Transverse colon (tissue), 4 donors: ENCODE measurements at regions of chr12 and their contacts with region 1.

Region 1: GRCh38 chr12:66538970-66539369 is 139.9 kb downstream of the GRIP1 start:
- DNase-seq: no peak
- H3K4me3 ChIP-seq: no peak overlapping the region
- H3K27ac ChIP-seq: no peak overlapping the region
- H3K4me1 ChIP-seq: no peaks in the 10 kb centered on the region
- H3K27me3 ChIP-seq: no peaks in the 10 kb centered on the region
- CTCF ChIP-seq: no peak
- EP300 ChIP-seq: no peak
- POLR2A ChIP-seq: no peak

Region 2: DNA sequence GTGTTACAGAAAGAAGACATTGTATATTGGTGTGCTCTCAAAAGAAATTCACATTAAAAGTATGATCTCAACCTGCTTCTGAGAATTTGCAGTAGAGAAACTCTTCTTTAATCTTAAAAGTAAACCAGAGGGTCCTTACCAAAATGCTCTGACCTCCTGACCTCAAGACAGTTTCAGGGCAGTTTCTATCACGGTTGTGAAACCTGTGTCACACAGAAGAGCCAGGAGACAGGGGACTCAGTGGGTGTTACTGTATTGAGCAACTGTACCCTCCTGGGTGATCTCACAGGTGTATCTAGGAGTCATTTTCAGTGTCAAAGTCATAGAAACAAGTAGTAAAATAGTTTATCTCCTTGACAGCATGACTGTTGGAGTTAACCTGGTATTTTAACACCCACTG is 38.1 kb before region 1 on chr12:
- in situ Hi-C with region 1: no loop called
- intact Hi-C with region 1: loop called (anchors 1 kb)
- DNase-seq: no peak
- H3K4me3 ChIP-seq: no peak overlapping the region
- H3K27ac ChIP-seq: no peak overlapping the region
- H3K4me1 ChIP-seq: no peaks in the 10 kb centered on the region
- H3K27me3 ChIP-seq: no peaks in the 10 kb centered on the region
- CTCF ChIP-seq: no peak
- EP300 ChIP-seq: no peak
- POLR2A ChIP-seq: no peak

Region 3: GRCh38 chr12:66514581-66514980 is 24.4 kb before region 1 on chr12:
- in situ Hi-C with region 1: no loop called
- intact Hi-C with region 1: no loop called
- DNase-seq: no peak
- H3K4me3 ChIP-seq: no peak overlapping the region
- H3K27ac ChIP-seq: no peak overlapping the region
- H3K4me1 ChIP-seq: no peaks in the 10 kb centered on the region
- H3K27me3 ChIP-seq: no peaks in the 10 kb centered on the region
- CTCF ChIP-seq: no peak
- EP300 ChIP-seq: no peak
- POLR2A ChIP-seq: no peak

Region 4: DNA sequence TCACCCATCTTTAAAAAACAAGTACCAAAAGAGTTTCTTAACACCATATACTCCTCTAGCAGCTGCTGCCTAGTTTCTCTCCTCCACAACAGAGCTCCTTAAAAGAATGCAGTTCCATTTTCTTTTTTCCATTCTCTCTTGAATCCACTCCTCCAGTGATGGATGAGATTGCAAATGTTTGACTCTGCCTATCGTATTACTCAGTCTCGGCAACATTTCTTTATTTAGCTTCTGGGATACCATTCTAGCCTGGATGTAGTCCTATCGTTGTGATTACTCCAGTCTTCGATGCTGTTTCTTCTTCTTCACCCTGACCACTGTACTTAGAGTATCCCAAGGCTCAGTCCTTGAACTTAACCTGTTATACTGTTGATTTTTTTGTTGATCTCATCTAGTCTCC is 761.0 kb after region 1 on chr12:
- in situ Hi-C with region 1: no loop called
- intact Hi-C with region 1: no loop called
- DNase-seq: no peak
- H3K4me3 ChIP-seq: no peak overlapping the region
- H3K27ac ChIP-seq: no peak overlapping the region
- H3K4me1 ChIP-seq: no peaks in the 10 kb centered on the region
- H3K27me3 ChIP-seq: no peaks in the 10 kb centered on the region
- CTCF ChIP-seq: no peak
- EP300 ChIP-seq: no peak
- POLR2A ChIP-seq: no peak